Endothelial cell of umbilical vein (primary cell): ENCODE measurements at regions of chr1 and their contacts with region 1.

Region 1: GRCh38 chr1:7070389-7071029 is 285.3 kb downstream of the CAMTA1 start:
- DNase-seq: peak; percentile 69
- H3K4me3 ChIP-seq: peak overlapping the region in 2 of 3 experiments; percentile 16 to 20
- H3K27ac ChIP-seq: no peak overlapping the region
- H3K4me1 ChIP-seq: peaks cover 4% of the 10 kb centered on the region
- H3K27me3 ChIP-seq: no peaks in the 10 kb centered on the region
- CTCF ChIP-seq: peak; percentile 73 to 95
- POLR2A ChIP-seq: no peak

Region 2: GRCh38 chr1:6727535-6727934 is 343.0 kb before region 1 on chr1:
- CTCF ChIA-PET with region 1: interaction called, 32 read pairs
- POLR2A ChIA-PET with region 1: no interaction called
- dilution Hi-C with region 1: no loop called
- intact Hi-C with region 1: no loop called
- DNase-seq: peak; percentile 71
- H3K4me3 ChIP-seq: no peak overlapping the region
- H3K27ac ChIP-seq: no peak overlapping the region
- H3K4me1 ChIP-seq: no peaks in the 10 kb centered on the region
- H3K27me3 ChIP-seq: peaks cover 2% of the 10 kb centered on the region in 2 experiments
- CTCF ChIP-seq: peak; percentile 81 to 94
- POLR2A ChIP-seq: no peak

Region 3: DNA sequence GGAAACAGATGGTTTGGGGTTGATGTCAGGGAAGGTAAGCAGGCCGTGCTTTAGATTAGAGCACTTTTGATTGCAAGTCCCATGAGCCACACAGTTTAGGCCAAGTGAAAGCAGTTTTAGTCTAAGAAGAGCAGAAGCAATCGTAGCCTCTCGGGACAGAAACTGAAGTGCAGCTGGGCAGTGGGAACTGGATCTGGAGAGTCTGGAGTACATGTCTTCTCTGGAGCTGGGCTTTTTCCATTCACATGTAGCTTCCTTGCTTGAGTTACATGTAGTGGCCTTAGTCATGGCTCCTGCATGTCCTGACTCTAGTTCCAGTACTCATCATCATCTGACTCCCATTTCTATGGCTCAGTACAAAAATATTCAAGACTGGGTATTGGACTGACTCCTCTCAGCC is 268.5 kb before region 1 on chr1:
- CTCF ChIA-PET with region 1: interaction called, 16 read pairs
- POLR2A ChIA-PET with region 1: no interaction called
- dilution Hi-C with region 1: no loop called
- intact Hi-C with region 1: no loop called
- DNase-seq: peak; percentile 63
- H3K4me3 ChIP-seq: no peak overlapping the region
- H3K27ac ChIP-seq: no peak overlapping the region
- H3K4me1 ChIP-seq: peaks cover 31% of the 10 kb centered on the region
- H3K27me3 ChIP-seq: no peaks in the 10 kb centered on the region
- CTCF ChIP-seq: no peak
- POLR2A ChIP-seq: no peak

Region 4: DNA sequence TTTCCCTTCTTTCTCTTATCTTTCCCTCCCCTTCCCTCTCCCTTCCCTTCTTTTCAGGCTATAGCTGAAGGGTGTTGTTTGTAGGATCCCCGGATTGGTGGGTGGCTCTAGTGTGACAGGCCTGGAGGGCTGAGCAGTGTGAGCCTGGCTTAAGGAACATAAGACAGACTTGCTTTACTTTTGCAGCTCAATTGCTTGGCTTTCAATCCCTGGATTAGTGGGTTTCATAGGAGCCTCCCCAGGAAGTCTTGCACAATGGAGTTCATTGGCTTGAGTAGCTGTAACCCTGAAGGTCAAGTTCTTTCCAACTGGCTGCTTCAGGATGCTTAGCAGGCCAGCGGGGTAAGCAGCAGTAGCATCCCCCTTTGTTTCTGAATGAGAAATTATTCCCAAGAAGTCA is 158.5 kb before region 1 on chr1:
- CTCF ChIA-PET with region 1: interaction called, 10 read pairs
- POLR2A ChIA-PET with region 1: no interaction called
- dilution Hi-C with region 1: no loop called
- intact Hi-C with region 1: no loop called
- DNase-seq: peak; percentile 72
- H3K4me3 ChIP-seq: no peak overlapping the region
- H3K27ac ChIP-seq: no peak overlapping the region
- H3K4me1 ChIP-seq: peaks cover 2% of the 10 kb centered on the region
- H3K27me3 ChIP-seq: no peaks in the 10 kb centered on the region
- CTCF ChIP-seq: no peak
- POLR2A ChIP-seq: no peak

Region 5: GRCh38 chr1:7084232-7084894 is 13.9 kb after region 1 on chr1:
- CTCF ChIA-PET with region 1: interaction called, 15 read pairs
- POLR2A ChIA-PET with region 1: no interaction called
- dilution Hi-C with region 1: no loop called
- intact Hi-C with region 1: no loop called
- DNase-seq: no peak
- H3K4me3 ChIP-seq: no peak overlapping the region
- H3K27ac ChIP-seq: no peak overlapping the region
- H3K4me1 ChIP-seq: no peaks in the 10 kb centered on the region
- H3K27me3 ChIP-seq: no peaks in the 10 kb centered on the region
- CTCF ChIP-seq: no peak
- POLR2A ChIP-seq: no peak